T47D (cell line): ENCODE measurements at regions of chr1 and their contacts with region 1.

Region 1: GRCh38 chr1:204128964-204129896 is 22.6 kb downstream of the ETNK2 start:
- DNase-seq: peak; percentile 86 to 91

Region 2: DNA sequence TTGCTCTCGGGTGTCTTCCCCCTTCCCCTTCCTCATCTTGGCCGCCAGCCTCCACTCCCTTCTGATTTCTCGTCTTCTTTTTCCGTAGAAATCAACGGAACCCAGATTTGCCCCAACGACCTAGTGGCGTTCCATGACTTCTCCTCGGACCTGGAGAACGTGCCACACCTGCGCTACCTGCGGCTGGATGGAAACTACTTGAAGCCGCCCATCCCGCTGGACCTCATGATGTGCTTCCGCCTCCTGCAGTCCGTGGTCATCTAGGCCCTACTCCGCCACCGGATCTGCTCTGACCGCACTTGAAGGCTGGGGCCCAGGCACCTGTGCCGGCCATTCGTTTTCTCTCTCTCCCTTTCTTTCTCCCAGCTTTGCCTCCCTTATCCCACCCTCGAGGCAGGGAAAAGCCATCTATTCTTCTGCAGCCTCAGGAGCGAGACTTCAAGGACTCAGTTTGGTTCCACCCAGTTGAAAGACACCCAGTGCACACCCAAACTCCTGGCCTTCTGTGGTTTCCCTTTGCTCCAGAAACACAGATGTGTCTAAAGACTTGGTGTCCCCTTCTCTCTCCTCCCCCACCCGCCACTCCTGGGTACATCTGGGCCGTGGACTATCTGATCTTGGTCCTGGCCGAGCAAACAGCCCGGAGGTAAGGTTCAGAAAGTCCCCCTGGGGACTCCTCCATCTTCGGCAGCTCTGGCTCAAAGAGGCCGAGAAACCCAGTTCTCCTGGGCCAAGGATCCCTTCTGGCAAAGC is 642.4 kb before region 1 on chr1:
- in situ Hi-C with region 1: no loop called
- DNase-seq: no peak

Region 3: DNA sequence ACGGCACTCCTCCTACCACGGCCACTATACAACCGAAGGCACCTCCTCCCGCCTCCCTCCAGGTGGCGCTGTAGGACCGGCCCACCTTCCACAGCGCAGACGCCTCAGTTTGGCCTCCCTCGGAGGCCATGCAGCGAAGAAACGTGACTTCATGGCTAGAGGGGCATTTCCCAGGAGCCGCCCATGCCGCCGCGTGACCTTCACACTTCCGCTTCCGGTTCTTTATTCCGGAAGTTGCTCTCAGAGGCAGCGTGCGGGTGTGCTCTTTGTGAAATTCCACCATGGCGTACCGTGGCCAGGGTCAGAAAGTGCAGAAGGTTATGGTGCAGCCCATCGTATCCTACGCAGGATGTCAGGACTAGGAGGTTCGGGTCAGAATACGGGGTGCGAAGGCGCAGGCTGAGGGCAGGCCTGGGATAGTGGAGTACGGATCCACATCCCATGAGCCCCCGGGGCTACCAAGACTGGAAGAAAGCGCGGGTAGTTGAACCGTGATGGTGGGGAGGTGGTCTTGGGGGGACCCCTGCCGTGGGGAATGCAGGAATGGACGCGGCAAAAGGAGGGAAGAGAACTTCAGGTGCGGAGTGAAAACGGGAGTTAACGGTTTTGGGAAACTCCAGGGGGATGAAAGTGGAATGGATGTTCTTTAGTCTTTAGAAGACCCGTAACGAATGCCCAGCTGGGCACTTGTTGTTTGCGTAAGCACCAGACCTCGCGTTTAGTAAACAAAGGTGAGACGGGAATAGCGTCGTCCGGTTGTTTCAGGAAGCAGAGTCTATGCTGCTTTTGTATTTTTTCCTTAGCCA is 267.6 kb before region 1 on chr1 and contains the start of gene SNRPE:
- in situ Hi-C with region 1: loop called (anchors 25 kb)
- DNase-seq: peak; percentile 78 to 99

Region 4: DNA sequence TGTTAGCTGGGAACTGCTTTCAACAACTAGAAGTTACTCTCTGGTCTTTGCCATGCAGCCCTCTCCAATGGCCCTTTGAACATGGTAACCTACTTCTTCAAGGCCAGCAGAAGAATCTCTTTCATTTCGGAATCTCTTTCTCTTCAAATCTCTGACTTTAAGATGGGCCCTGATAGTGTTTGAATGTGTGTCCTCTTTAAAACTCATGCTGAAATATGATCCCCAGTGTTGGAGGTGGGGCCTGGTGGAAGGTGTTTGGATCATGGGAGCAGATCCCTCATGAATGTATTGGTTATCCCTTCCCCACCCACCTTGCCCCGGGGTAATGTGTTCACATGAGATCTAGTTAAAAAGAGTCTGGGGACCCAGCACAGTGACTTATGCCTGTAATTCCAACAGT is 110.8 kb before region 1 on chr1:
- in situ Hi-C with region 1: no loop called
- DNase-seq: peak in 1 of 2 experiments; percentile 54

Region 5: GRCh38 chr1:204746838-204747442 is 617.7 kb after region 1 on chr1:
- in situ Hi-C with region 1: no loop called
- DNase-seq: peak in 1 of 2 experiments; percentile 79

Region 6: GRCh38 chr1:204763706-204764427 is 634.6 kb after region 1 on chr1:
- in situ Hi-C with region 1: no loop called
- DNase-seq: peak; percentile 50 to 91